ENCODE measurements at regions of chr4 and their contacts with region 1.

Region 1: GRCh38 chr4:40489961-40490360 is 139.7 kb downstream of the RBM47 start:
- DNase-seq: no peak
- H3K4me3 ChIP-seq: no peak overlapping the region
- H3K4me3 Mint-ChIP-seq: no peak overlapping the region
- H3K27ac Mint-ChIP-seq: no peak overlapping the region
- H3K4me1 ChIP-seq: peaks cover 22% of the 10 kb centered on the region
- H3K4me1 Mint-ChIP-seq: peaks cover 23% of the 10 kb centered on the region
- H3K27me3 ChIP-seq: no peaks in the 10 kb centered on the region
- H3K27me3 Mint-ChIP-seq: no peaks in the 10 kb centered on the region
- CTCF ChIP-seq: no peak

Region 2: DNA sequence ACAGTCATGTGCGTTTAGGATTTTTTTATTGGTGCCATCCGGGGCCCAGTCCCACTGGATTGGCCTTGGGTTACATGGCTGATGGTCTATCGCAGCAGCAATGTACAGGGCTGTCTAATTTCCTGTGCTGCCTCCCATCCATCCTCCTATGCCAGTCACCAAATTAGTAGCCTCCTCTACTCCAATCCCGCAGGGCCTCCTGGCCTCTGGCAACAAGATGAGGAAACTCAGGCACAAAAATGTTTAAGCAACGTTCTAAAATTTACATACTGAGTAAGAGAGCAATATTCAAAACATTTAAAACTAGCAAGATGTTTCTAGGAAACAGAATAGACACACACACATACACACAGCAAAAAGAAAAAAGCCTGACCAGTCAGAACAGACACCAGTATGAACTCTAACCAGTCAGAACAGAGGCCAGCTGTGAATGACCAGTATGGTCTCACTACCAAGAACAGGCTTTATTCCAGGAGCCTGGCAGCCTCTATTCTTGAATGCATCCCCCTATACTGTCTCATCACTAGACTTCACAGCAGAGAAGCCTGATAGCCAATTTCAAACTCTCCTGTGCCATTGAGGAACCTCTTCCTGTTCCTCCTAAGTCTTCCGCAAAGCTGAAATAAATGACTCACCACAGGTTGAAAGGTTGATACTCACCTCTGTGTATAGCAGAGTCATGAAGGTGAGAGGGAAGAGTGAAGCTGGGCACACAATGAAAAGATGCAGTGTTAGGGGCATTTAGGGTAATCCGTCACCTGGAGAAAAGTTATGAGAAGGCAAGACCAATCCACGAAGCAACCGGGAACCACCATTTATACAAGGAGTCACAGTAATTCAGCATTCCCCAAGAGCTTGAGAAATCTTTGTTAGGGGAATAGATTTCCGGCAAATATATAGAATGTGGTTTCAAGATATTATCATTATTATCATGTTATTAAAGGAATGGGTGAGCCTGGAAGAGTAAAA is 112.1 kb before region 1 on chr4:
- CTCF ChIA-PET with region 1: no interaction called
- POLR2A ChIA-PET with region 1: no interaction called
- intact Hi-C with region 1: no loop called
- DNase-seq: no peak
- H3K4me3 ChIP-seq: no peak overlapping the region
- H3K4me3 Mint-ChIP-seq: no peak overlapping the region
- H3K27ac Mint-ChIP-seq: no peak overlapping the region
- H3K4me1 ChIP-seq: 0 out of 2 replicates have a peak, but pooled peaks cover 3% of the 10 kb centered on the region
- H3K4me1 Mint-ChIP-seq: peaks cover 7% of the 10 kb centered on the region
- H3K27me3 ChIP-seq: no peaks in the 10 kb centered on the region
- H3K27me3 Mint-ChIP-seq: no peaks in the 10 kb centered on the region
- CTCF ChIP-seq: no peak

Region 3: GRCh38 chr4:40427128-40427527 is 62.8 kb before region 1 on chr4:
- CTCF ChIA-PET with region 1: no interaction called
- POLR2A ChIA-PET with region 1: interaction called, 11 read pairs
- intact Hi-C with region 1: no loop called
- DNase-seq: no peak
- H3K4me3 ChIP-seq: no peak overlapping the region
- H3K4me3 Mint-ChIP-seq: no peak overlapping the region
- H3K27ac Mint-ChIP-seq: no peak overlapping the region
- H3K4me1 ChIP-seq: 0 out of 2 replicates have a peak, but pooled peaks cover 4% of the 10 kb centered on the region
- H3K4me1 Mint-ChIP-seq: peaks cover 6% of the 10 kb centered on the region
- H3K27me3 ChIP-seq: no peaks in the 10 kb centered on the region
- H3K27me3 Mint-ChIP-seq: no peaks in the 10 kb centered on the region
- CTCF ChIP-seq: no peak

Region 4: GRCh38 chr4:40473578-40474388 is 16.2 kb before region 1 on chr4:
- CTCF ChIA-PET with region 1: interaction called, 3 read pairs
- POLR2A ChIA-PET with region 1: no interaction called
- intact Hi-C with region 1: loop called (anchors 2 kb)
- DNase-seq: peak; percentile 76 to 86
- H3K4me3 ChIP-seq: peak overlapping the region; percentile 18
- H3K4me3 Mint-ChIP-seq: peak overlapping the region; percentile 65
- H3K27ac Mint-ChIP-seq: peak overlapping the region; percentile 53
- H3K4me1 ChIP-seq: peaks cover 43% of the 10 kb centered on the region
- H3K4me1 Mint-ChIP-seq: peaks cover 26% of the 10 kb centered on the region
- H3K27me3 ChIP-seq: no peaks in the 10 kb centered on the region
- H3K27me3 Mint-ChIP-seq: no peaks in the 10 kb centered on the region
- CTCF ChIP-seq: no peak

Region 5: DNA sequence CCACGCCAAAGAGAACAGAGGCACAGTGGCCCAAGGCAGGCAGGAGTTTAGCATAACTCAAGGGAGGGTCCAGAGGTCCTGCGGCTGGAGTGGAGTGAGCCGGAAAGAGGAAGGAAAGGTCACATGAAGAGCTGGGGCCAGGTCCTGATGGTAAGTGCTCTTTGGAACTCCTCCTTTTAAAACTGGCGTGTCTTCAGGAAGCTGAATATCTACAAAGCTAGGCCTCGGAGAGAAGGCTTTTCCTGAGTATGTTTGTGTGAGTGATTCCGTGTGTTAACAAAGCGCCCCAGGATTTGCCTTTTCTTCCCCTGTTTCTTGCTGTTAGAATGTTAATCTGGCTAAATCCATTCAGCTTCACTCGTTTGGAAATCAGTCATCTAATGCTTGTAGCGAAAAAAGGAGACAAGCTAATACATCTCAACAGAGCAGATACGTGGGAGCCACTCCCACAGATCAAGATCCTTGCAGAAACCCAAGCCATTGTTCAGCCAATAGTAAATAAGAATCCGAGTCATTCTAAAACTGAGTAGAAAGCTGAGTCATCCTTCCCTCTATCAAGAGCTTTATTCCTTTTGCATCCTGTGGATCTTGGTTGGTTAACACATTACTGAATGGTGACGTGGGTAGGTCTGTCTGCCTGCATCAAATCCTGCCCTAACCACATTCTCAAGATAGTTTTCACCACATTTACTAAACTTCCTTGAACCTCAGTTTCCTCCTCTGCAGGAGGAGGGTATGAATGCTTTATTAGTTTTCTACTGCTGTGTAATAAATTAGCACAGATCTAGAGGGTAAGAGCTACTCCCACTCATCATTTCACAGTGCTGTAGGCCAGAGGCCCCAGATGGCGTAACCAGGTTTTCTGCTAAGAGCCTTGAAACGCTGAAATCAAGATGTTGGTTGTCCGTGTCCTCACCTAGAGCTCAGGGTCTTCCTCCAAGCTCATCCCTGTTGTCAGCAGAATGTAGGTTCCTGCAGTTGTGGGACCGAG is 182.9 kb after region 1 on chr4:
- CTCF ChIA-PET with region 1: no interaction called
- POLR2A ChIA-PET with region 1: no interaction called
- intact Hi-C with region 1: no loop called
- DNase-seq: peak; percentile 37 to 46
- H3K4me3 ChIP-seq: no peak overlapping the region
- H3K4me3 Mint-ChIP-seq: peak overlapping the region; percentile 52
- H3K27ac Mint-ChIP-seq: peak overlapping the region; percentile 84
- H3K4me1 ChIP-seq: peaks cover 38% of the 10 kb centered on the region
- H3K4me1 Mint-ChIP-seq: peaks cover 34% of the 10 kb centered on the region
- H3K27me3 ChIP-seq: no peaks in the 10 kb centered on the region
- H3K27me3 Mint-ChIP-seq: no peaks in the 10 kb centered on the region
- CTCF ChIP-seq: no peak

Measured in Caco-2 (cell line).